ENCODE measurements at regions of chr5 and their contacts with region 1.

Region 1: GRCh38 chr5:14108170-14108996 is 34.8 kb upstream of the TRIO start:
- DNase-seq: peak; percentile 91
- ATAC-seq: peak; percentile 83
- H3K4me3 ChIP-seq: no peak overlapping the region
- H3K27ac ChIP-seq: peak overlapping the region; percentile 54
- H3K4me1 ChIP-seq: peaks cover 9% of the 10 kb centered on the region
- H3K27me3 ChIP-seq: no peaks in the 10 kb centered on the region
- CTCF ChIP-seq: peak; percentile 72
- POLR2A ChIP-seq: no peak
- RAD21 ChIP-seq: peak; percentile 72

Region 2: GRCh38 chr5:14086261-14086660 is 22.1 kb before region 1 on chr5:
- CTCF ChIA-PET with region 1: interaction called, 3 read pairs
- POLR2A ChIA-PET with region 1: no interaction called
- dilution Hi-C with region 1: no loop called
- in situ Hi-C with region 1: no loop called
- intact Hi-C with region 1: loop called (anchors 1 kb)
- DNase-seq: no peak
- ATAC-seq: peak; percentile 21; the same call in 1 of the 2 replicates
- H3K4me3 ChIP-seq: no peak overlapping the region
- H3K27ac ChIP-seq: no peak overlapping the region
- H3K4me1 ChIP-seq: no peaks in the 10 kb centered on the region
- H3K27me3 ChIP-seq: no peaks in the 10 kb centered on the region
- CTCF ChIP-seq: no peak
- POLR2A ChIP-seq: no peak
- RAD21 ChIP-seq: no peak

Region 3: DNA sequence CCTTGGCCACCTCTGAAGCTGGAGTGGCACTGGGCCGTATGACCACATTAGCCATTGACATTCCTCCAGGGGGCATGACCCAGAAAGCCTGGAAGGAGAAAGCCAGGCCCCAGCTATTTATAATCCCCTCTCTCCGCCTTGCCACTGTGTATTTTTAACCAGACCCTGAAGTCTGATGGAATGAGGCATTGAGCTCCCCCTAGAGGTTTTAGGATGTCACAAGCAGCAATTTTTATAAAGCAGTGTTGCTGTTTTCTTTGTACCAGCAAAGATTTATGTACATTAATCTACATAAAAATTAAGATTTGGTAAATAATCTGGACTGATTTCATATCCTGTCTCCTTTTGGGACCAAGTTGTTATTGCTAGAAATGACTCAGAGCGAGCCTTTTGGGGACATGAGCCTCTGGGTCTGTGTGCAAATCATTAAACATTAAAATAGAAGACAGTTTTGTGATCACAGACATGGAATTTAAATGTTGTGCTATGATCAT is 161.9 kb after region 1 on chr5:
- CTCF ChIA-PET with region 1: no interaction called
- POLR2A ChIA-PET with region 1: no interaction called
- dilution Hi-C with region 1: no loop called
- in situ Hi-C with region 1: no loop called
- intact Hi-C with region 1: loop called (anchors 1 kb)
- DNase-seq: peak; percentile 64
- ATAC-seq: peak; percentile 52
- H3K4me3 ChIP-seq: no peak overlapping the region
- H3K27ac ChIP-seq: peak overlapping the region; percentile 89
- H3K4me1 ChIP-seq: peaks cover 34% of the 10 kb centered on the region
- H3K27me3 ChIP-seq: no peaks in the 10 kb centered on the region
- CTCF ChIP-seq: peak; percentile 76
- POLR2A ChIP-seq: no peak
- RAD21 ChIP-seq: peak; percentile 71

Region 4: DNA sequence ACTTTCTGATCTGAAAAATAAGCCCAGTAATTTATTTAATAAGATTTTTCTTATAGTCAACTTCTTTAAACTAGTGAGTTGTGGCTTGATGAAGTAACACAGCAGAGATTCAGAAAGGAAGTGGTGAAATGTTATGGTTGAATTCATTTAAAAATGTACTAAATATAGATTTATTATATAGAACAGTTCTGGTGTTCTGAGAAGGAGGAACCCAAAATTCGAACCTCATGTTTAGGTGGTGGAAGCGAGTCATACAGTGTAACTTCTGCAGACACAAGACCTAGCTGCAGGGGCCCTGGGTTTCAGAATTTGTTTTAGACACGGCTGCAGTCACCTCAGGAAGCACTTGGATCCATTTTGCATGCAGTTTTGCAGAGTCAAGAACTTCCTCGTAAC is 223.0 kb after region 1 on chr5:
- CTCF ChIA-PET with region 1: no interaction called
- POLR2A ChIA-PET with region 1: no interaction called
- dilution Hi-C with region 1: no loop called
- in situ Hi-C with region 1: no loop called
- intact Hi-C with region 1: no loop called
- DNase-seq: peak; percentile 32
- ATAC-seq: no peak
- H3K4me3 ChIP-seq: no peak overlapping the region
- H3K27ac ChIP-seq: no peak overlapping the region
- H3K4me1 ChIP-seq: peaks cover 18% of the 10 kb centered on the region
- H3K27me3 ChIP-seq: no peaks in the 10 kb centered on the region
- CTCF ChIP-seq: no peak
- POLR2A ChIP-seq: no peak
- RAD21 ChIP-seq: no peak

Region 5: GRCh38 chr5:14351845-14352712 is 243.7 kb after region 1 on chr5:
- CTCF ChIA-PET with region 1: no interaction called
- POLR2A ChIA-PET with region 1: no interaction called
- dilution Hi-C with region 1: no loop called
- in situ Hi-C with region 1: no loop called
- intact Hi-C with region 1: no loop called
- DNase-seq: peak; percentile 70
- ATAC-seq: peak; percentile 76
- H3K4me3 ChIP-seq: no peak overlapping the region
- H3K27ac ChIP-seq: no peak overlapping the region
- H3K4me1 ChIP-seq: peaks cover 26% of the 10 kb centered on the region
- H3K27me3 ChIP-seq: no peaks in the 10 kb centered on the region
- CTCF ChIP-seq: peak; percentile 74
- POLR2A ChIP-seq: no peak
- RAD21 ChIP-seq: peak; percentile 49

Region 6: DNA sequence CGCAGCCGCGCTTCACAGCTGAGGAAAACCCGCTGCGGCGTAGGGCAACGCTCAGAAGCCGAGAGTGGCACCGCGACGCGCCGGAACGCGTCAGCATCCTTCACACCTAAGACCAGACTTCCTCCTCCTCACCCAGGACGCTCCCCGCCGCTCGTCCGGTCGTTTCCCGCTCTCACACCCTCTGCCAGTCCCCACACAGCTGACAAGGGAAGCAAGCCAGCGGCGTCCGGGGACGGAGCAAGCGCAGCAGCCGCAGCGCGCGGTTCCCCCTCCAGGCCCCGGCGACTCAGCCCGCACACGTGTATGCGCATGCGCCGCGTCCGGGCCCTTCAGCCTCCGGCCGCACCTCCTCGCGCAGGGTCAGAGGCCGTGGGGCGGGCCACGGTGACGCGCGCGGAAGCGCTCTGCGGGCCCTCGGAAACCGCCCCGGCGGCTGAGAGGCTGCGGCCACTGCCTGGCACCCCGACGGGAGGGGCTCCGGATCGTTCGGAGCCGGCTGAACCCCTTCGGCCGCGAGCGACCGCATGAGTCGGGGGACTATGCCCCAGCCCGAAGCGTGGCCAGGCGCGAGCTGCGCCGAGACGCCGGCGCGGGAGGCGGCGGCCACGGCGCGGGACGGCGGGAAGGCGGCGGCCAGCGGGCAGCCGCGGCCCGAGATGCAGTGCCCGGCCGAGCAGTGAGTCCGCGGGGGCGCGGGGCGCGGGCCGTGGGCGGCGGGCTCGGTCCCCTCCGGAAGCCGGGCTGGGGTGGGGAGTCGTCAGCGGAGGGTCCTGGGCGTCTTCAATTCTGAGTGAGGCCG is 556.1 kb after region 1 on chr5 and contains the start of gene OTULIN:
- CTCF ChIA-PET with region 1: no interaction called
- POLR2A ChIA-PET with region 1: no interaction called
- dilution Hi-C with region 1: no loop called
- in situ Hi-C with region 1: loop called (anchors 25 kb)
- intact Hi-C with region 1: no loop called
- DNase-seq: peak; percentile 85
- ATAC-seq: peak; percentile 91
- H3K4me3 ChIP-seq: peak within 1 kb of the TSS; percentile 64
- H3K27ac ChIP-seq: peak within 1 kb of the TSS; percentile 85
- H3K4me1 ChIP-seq: peaks cover 11% of the 10 kb centered on the region
- H3K27me3 ChIP-seq: no peaks in the 10 kb centered on the region
- CTCF ChIP-seq: no peak
- POLR2A ChIP-seq: peak; percentile 67
- RAD21 ChIP-seq: no peak
- total RNA-seq, gene OTULIN: 19.5 and 20.3 TPM in 2 replicates

Measured in IMR-90 (cell line).